Dendritic cell treated with granulocyte-macrophage colony-stimulating factor and Interleukin-4, amounts not matched to agents 40 ng/mL and 50 ng/mL, for 4 days (primary cell): ENCODE measurements at regions of chr19 and their contacts with region 1.

Region 1: GRCh38 chr19:19663256-19664038 is at the start of gene ATP13A1:
- H3K4me3 Mint-ChIP-seq: peak within 1 kb of the TSS; percentile 96
- H3K27ac Mint-ChIP-seq: peak within 1 kb of the TSS; percentile 98
- H3K4me1 Mint-ChIP-seq: peaks cover 38% of the 10 kb centered on the region
- H3K27me3 Mint-ChIP-seq: no peaks in the 10 kb centered on the region

Region 2: GRCh38 chr19:19568802-19569756 is 94.4 kb before region 1 on chr19:
- intact Hi-C with region 1: no loop called
- H3K4me3 Mint-ChIP-seq: no peak overlapping the region
- H3K27ac Mint-ChIP-seq: no peak overlapping the region
- H3K4me1 Mint-ChIP-seq: no peaks in the 10 kb centered on the region
- H3K27me3 Mint-ChIP-seq: no peaks in the 10 kb centered on the region

Region 3: DNA sequence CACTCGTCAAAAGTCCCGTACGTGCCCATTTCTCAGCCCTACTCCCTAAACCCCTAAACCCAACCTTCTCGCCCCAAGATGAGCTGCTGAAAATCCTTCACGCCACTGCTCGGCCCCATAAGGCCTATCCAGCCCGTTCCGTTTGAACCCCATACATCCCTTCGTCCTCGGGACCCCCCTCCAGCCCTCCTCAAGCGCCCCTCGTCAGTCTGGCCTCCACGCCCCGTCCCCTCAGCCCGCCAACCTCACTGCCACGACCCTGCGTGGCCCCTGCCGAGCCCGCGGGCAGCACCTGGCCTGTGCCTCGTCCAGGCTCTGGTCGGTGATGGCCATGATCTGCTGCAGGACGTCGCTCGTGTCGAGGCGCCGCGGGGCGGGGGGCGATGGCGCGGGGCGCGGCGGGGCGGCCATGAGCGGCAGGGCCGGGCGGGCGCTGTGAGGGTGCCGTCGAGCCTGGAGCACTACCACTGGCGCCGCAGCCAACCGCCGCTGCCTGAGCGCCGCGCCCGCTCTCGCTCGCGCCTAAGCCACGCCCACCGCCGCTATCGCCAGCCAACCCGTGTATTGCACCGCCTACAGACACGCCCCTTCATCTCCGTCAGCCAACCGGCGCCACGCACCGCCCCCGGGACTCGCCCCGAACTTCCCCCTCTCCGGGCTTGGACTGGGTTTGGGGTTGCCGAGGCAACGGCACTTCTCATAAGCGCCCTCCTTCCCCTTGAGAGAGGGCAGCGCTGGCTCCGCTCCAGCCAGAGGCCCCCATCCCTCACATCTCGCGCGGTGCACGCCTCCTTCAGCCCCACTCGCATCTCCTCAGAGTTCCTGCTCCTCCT is 45.0 kb before region 1 on chr19 and contains the start of gene PBX4:
- intact Hi-C with region 1: loop called (anchors 2 kb)
- H3K4me3 Mint-ChIP-seq: peak within 1 kb of the TSS; percentile 44
- H3K27ac Mint-ChIP-seq: peak within 1 kb of the TSS; percentile 56
- H3K4me1 Mint-ChIP-seq: peaks cover 30% of the 10 kb centered on the region
- H3K27me3 Mint-ChIP-seq: peaks cover 9% of the 10 kb centered on the region

Region 4: GRCh38 chr19:19643158-19644053 is 20.0 kb before region 1 on chr19 and contains the start of gene GMIP:
- intact Hi-C with region 1: loop called (anchors 1 kb)
- H3K4me3 Mint-ChIP-seq: peak within 1 kb of the TSS; percentile 98
- H3K27ac Mint-ChIP-seq: peak within 1 kb of the TSS; percentile 98
- H3K4me1 Mint-ChIP-seq: peaks cover 27% of the 10 kb centered on the region
- H3K27me3 Mint-ChIP-seq: no peaks in the 10 kb centered on the region

Region 5: GRCh38 chr19:19745496-19746285 is 82.2 kb after region 1 on chr19:
- intact Hi-C with region 1: no loop called
- H3K4me3 Mint-ChIP-seq: no peak overlapping the region
- H3K27ac Mint-ChIP-seq: no peak overlapping the region
- H3K4me1 Mint-ChIP-seq: no peaks in the 10 kb centered on the region
- H3K27me3 Mint-ChIP-seq: no peaks in the 10 kb centered on the region

Region 6: DNA sequence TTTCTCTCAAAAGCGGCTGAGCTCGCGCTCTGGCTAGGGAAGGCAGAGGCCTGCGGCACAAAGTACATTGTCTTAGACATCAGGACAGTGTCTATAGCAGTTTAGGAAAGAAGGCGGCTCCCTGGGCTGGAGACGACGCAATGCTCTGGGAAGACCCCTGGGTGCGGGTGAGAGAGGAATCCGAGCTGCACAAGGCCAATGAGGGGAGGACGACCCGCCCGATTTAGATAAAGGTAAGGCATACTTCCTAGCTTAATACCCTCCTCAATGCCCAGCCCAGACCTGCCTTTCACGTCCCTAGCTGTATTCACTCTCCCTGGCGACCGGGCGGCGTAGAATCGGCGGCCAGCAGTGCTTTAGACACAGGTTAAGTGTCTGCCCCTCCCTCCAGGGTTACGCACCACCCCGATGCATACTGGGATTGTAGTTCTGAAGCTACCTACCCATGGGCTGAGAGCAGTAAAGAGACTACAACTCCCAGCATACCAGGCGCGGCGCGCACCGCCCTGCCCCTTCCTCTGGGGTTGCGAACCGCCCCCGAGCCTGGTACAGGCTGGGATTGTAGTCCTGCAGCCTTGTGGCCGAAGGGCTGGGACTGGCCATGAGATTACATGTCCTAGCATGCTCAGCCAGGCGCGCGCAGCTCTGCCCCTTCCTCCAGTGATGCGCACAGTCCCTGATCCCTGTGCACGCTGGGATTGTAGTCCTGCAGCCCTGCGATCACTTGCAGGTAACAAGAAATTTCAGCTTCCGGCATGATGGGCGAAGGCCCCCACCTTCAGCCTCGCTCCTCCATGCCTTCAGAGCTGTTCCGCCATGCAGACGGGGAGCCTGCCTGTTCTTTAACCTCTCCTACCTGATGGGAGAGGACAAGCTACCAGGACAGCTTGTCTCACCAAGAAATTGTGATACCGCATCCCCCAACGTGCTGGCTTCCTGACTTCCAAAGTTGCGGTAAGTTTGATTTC is 112.9 kb after region 1 on chr19:
- intact Hi-C with region 1: loop called (anchors 5 kb)
- H3K4me3 Mint-ChIP-seq: peak overlapping the region; percentile 93
- H3K27ac Mint-ChIP-seq: peak overlapping the region; percentile 88
- H3K4me1 Mint-ChIP-seq: peaks cover 33% of the 10 kb centered on the region
- H3K27me3 Mint-ChIP-seq: no peaks in the 10 kb centered on the region

Region 7: GRCh38 chr19:19821366-19821951 is 158.0 kb after region 1 on chr19 and contains the start of gene ZNF506:
- intact Hi-C with region 1: loop called (anchors 5 kb)
- H3K4me3 Mint-ChIP-seq: peak within 1 kb of the TSS; percentile 97
- H3K27ac Mint-ChIP-seq: peak within 1 kb of the TSS; percentile 98
- H3K4me1 Mint-ChIP-seq: peaks cover 8% of the 10 kb centered on the region
- H3K27me3 Mint-ChIP-seq: no peaks in the 10 kb centered on the region

Region 8: DNA sequence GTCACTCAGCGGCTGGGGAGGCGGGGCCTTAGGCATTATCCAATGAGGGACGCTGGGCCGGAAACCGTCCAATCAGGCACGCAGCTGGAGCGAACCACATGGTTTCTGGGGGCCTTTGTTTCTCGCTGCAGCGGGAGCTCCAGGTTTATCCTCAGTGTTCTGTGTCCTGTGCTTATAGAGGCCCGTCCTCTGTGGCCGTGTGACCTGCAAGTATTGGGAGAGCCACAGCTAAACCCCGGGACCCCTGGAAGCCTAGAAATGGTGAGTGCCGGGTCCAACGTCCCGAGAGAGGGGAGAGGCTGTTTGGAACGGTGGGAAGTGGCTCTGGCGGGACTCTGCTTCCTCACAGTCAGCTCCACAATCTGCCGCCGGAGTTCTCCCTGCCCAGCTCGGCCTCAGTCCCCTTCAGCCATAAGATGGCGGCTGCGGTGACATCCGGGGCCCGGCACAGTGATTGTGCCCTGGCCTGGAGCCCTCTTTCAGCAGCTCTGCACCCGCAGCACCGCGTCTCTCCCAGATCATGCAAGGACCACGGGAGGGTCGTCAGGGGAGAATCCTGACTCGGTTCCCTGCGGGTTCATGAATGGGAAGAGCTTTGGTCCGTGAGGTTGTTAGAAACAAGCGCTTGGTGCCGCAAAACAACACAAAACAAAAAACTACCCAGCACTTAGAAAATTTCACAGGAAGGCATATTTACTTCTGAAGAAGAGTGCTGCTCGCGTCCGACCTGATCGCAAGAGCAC is 202.5 kb after region 1 on chr19 and contains the start of gene ZNF253:
- intact Hi-C with region 1: loop called (anchors 5 kb)
- H3K4me3 Mint-ChIP-seq: peak within 1 kb of the TSS; percentile 85
- H3K27ac Mint-ChIP-seq: peak within 1 kb of the TSS; percentile 99
- H3K4me1 Mint-ChIP-seq: peaks cover 12% of the 10 kb centered on the region
- H3K27me3 Mint-ChIP-seq: peaks cover under 1% of the 10 kb centered on the region

Region 9: DNA sequence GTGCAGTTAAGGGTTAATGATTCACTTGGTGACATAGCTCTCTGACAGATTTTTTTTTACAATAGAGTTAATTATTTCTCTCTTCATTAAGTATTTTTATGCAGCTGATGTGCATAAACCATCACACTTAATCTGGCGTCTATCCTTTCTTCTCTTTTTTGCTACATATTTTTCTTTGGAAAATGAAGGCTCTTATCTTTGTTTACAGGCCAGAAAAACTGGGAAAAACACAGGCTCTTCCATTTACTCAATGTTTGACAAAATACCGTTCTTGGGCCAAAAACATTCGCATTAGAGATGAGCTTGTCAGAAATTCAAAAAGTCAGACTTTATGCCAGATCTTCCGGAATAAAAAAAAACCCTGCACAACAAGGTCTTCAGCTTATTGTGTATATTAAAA is 214.3 kb after region 1 on chr19:
- intact Hi-C with region 1: no loop called
- H3K4me3 Mint-ChIP-seq: no peak overlapping the region
- H3K27ac Mint-ChIP-seq: no peak overlapping the region
- H3K4me1 Mint-ChIP-seq: no peaks in the 10 kb centered on the region
- H3K27me3 Mint-ChIP-seq: no peaks in the 10 kb centered on the region

Region 10: DNA sequence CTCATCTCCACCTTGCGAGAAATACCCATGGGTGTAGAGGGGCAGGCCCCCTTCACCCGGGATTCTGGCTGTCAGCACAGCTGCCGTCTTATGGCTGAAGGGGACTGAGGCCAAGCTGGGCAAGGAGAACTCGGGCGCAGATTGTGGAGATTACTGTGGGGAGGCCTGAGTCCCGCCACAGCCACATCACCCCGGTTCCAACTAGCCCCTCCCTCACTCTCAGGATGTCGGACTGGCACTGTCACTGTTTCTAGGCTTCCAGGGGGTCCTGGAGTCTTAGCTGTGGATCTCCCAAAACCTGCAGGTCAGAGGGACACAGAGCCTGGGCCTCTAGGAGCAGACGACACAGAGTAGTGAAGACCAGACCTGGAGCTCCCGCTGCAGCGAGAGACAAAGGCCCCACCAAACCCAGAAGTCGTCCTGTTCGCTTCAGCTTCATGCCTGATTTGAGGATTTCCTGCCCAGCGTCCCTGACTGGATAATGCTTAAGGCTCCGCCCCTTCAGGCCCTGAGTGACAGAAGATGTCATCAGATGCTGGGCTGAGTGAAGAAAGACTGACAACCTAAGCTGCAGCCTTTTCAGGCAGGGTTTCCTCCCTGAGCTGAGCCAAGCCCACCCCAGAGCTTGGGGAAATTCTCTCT is 293.1 kb after region 1 on chr19:
- intact Hi-C with region 1: loop called (anchors 10 kb)
- H3K4me3 Mint-ChIP-seq: no peak overlapping the region
- H3K27ac Mint-ChIP-seq: no peak overlapping the region
- H3K4me1 Mint-ChIP-seq: no peaks in the 10 kb centered on the region
- H3K27me3 Mint-ChIP-seq: no peaks in the 10 kb centered on the region